Activated T-helper 2 cell treated with anti-CD3 and anti-CD28 coated beads, Interferon-gamma antibody, Interleukin-2, Interleukin-4, amounts not matched to agents 10 μg/mL and 5 μg/mL and 100 μg/mL, durations not matched to agents 14 hours and 24 hours and 36 hours (primary cell): ENCODE measurements at regions of chr9 and their contacts with region 1.

Region 1: GRCh38 chr9:33778700-33779351 is 16.5 kb upstream of the PRSS3 start:
- DNase-seq: peak; percentile 45
- H3K4me3 Mint-ChIP-seq: no peak overlapping the region
- H3K27ac Mint-ChIP-seq: no peak overlapping the region
- H3K4me1 Mint-ChIP-seq: peaks cover 9% of the 10 kb centered on the region
- H3K27me3 Mint-ChIP-seq: peaks cover 34% of the 10 kb centered on the region

Region 2: DNA sequence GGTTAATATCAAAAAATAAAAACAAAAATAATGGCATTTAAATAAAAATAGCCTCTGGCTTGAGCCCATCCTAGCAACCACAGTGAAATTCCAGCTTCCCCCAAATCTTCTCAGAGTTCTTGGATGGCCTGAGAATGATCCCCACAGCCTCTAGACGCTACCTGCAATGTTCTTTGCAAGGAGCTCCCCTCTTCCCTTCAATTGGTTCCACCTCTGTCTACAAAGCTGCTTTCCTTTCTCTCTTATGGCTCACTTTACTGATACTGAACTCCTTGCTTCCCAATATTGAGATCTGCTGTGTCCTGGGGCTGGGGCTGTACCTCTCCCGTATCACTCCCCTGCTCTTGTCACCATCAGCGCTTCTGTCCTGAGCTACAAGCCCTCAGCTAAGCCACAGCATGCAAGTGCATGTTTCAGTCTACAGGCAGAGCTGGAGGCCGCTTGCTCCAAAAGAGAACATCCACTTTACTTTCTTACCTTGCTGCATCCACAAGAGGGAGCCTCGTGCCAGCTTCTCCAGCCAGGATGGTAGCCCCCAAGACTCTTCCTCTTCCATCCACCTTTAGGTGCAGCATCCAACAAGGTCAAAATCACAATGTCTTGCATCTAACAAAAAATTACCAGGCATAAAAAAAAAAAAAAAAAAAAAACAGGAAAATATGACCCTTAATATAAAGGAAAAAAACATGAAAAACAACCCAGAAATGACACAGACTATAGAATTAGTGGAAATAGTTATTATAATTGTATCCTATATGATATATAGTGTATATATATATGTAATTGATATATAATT is 40.8 kb before region 1 on chr9:
- intact Hi-C with region 1: loop called (anchors 1 kb)
- DNase-seq: no peak
- H3K4me3 Mint-ChIP-seq: no peak overlapping the region
- H3K27ac Mint-ChIP-seq: no peak overlapping the region
- H3K4me1 Mint-ChIP-seq: no peaks in the 10 kb centered on the region
- H3K27me3 Mint-ChIP-seq: peaks cover 21% of the 10 kb centered on the region

Region 3: DNA sequence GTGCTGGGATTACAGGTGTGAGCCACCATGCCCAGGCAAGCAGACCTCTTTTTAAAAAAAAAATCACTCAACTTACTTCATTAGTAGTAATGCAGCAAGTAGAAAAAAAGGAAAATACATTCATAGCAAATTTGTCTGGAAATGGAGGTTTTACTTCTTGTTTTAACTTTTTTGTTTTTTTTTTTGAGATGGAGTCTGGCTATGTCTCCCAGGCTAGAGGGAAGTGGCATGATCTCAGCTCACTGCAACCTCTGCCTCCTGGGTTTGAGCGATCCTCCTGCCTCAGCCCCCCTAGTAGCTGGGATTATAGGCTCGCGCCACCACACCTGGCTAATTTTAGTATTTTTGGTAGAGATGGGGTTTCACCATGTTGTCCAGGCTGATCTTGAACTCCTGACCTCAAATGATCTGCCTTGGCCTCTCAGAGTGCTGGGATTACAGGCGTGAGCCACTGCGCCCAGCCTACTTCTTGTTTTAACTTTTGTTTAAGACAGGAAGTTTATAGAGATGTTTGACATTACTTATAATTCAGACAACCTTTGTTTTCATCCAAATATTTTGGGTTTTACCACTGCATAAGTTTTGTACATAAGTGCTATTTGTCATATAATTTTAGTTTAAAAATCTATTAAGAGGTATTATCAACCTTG is 64.6 kb after region 1 on chr9:
- intact Hi-C with region 1: no loop called
- DNase-seq: no peak
- H3K4me3 Mint-ChIP-seq: no peak overlapping the region
- H3K27ac Mint-ChIP-seq: no peak overlapping the region
- H3K4me1 Mint-ChIP-seq: peaks cover 16% of the 10 kb centered on the region
- H3K27me3 Mint-ChIP-seq: no peaks in the 10 kb centered on the region